Right ventricle myocardium superior (tissue), 1 donor: ENCODE measurements at regions of chr4 and their contacts with region 1.

Region 1: GRCh38 chr4:6709230-6710114 is at the start of gene MRFAP1L1:
- DNase-seq: peak; percentile 98
- ATAC-seq: peak; percentile 94
- total RNA-seq, gene MRFAP1L1: 39.7 TPM

Region 2: GRCh38 chr4:6640292-6641163 is 68.9 kb before region 1 on chr4 and contains the start of gene MRFAP1:
- intact Hi-C with region 1: loop called (anchors 5 kb)
- DNase-seq: peak; percentile 97
- ATAC-seq: peak; percentile 95
- total RNA-seq, gene MRFAP1: 219 TPM

Region 3: DNA sequence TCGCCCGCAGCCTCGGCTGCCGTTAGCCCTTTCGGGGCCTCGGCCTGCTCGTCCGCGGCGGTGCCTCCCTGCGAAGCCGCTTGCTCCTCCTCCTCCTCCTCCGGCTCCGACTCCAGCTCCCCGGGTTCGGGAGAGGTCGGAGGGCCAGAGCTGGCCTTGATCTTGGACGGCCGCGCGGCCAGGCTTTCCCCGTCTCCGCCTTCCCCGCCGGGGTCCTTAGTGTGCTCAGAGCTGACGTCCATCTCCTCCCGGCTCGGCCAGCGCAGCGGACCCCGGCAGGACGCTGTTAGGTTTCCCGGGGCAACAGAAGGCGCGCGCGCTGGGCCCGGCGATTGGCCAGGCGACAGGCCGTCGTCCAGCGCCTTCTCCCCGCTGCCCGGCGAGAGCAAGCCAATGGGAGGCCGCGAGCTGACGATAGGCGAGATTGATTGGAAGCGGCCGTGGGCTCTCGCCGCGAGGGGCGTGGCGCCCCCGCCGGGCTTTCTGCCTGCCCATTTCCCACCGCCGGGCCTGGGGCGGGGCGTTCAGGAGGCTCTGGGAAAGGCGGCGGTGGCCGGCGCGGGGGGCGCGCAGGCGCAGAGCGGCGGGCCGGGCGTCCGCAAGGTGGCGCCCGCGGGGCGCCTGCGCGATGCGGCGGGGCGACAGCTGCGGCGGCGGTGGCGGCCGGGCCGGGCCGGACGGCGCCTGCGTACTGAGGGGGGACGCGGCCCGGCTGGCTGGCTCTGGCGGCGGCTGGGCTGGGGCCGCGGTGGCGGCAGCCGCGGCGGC is 333.4 kb after region 1 on chr4 and contains the start of gene TADA2B:
- intact Hi-C with region 1: loop called (anchors 10 kb)
- DNase-seq: peak; percentile 98
- ATAC-seq: peak; percentile 95
- total RNA-seq, gene TADA2B: 35.5 TPM